A549 (cell line): ENCODE measurements at regions of chr13 and their contacts with region 1.

Region 1: DNA sequence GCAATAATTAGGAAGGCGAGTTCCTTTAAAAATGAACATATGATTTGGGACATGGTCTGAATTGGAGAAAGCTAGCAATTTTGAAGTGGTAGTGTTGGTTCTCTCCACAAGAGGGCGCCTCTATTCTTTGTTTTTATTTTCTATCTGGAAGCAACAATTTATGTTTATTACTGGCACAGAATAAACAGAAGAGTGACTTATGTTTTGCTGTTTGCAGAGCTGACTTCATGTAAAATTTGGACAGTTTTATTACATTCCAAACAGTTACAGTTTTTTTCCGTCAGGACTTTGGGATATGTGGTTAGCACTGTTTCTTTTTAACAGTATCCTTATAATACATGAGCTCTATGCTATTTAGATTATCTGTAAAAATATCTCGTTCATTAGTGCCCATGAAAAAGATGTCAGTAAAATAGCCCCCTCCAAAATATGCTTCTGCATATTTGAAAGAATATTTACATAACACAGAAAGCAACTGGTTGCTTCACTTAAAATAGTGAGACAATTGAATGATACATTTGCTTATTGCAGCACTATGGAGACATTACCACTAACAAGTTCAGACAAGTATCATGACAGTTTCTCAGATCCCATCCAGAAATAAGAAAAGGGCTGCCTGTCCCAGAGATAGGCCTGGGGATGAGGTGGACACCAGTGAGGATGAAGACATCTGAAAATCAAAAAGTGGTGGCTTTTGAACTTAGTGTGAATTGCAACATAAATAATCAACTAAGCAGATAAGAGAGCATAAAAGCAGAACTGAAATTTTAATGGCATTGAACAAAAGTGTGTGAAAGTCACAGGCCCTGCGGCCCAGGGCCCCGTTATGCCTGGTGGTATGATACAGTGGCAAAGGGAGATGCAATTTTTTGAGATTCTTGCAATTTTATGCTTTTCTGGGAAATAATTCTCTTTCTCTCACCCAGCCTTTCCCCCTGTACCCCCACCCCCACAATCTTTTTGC is 32.3 kb upstream of the FGF9 start:
- DNase-seq: peak; percentile 14 to 15
- ATAC-seq: no peak
- H3K4me3 ChIP-seq: no peak overlapping the region
- H3K27ac ChIP-seq: no peak overlapping the region
- H3K4me1 ChIP-seq: peaks cover 10% of the 10 kb centered on the region; the same call in 2 of the 3 replicates
- CTCF ChIP-seq: peak; percentile 61
- EP300 ChIP-seq: no peak
- POLR2A ChIP-seq: no peak
- RAD21 ChIP-seq: peak; percentile 52 to 59

Region 2: GRCh38 chr13:21670006-21670882 is 31.6 kb after region 1 on chr13:
- CTCF ChIA-PET with region 1: interaction called, 12 read pairs
- POLR2A ChIA-PET with region 1: interaction called, 3 read pairs
- DNase-seq: peak; percentile 21 to 48
- ATAC-seq: peak; percentile 60 to 63
- H3K4me3 ChIP-seq: peak overlapping the region; percentile 52
- H3K27ac ChIP-seq: peak overlapping the region in 1 of 2 experiments; percentile 78; a peak in 3 of 6 replicates
- H3K4me1 ChIP-seq: peaks cover 20% of the 10 kb centered on the region; the same call in 2 of the 3 replicates
- CTCF ChIP-seq: no peak; the same call in 2 of the 3 replicates
- EP300 ChIP-seq: no peak
- POLR2A ChIP-seq: no peak
- RAD21 ChIP-seq: no peak

Region 3: GRCh38 chr13:21785989-21786388 is 147.4 kb after region 1 on chr13:
- CTCF ChIA-PET with region 1: no interaction called
- POLR2A ChIA-PET with region 1: no interaction called
- DNase-seq: no peak
- ATAC-seq: no peak
- H3K4me3 ChIP-seq: no peak overlapping the region
- H3K27ac ChIP-seq: no peak overlapping the region
- H3K4me1 ChIP-seq: no peaks in the 10 kb centered on the region
- CTCF ChIP-seq: no peak
- EP300 ChIP-seq: no peak
- POLR2A ChIP-seq: no peak
- RAD21 ChIP-seq: no peak

Region 4: GRCh38 chr13:22285867-22286266 is 647.3 kb after region 1 on chr13:
- CTCF ChIA-PET with region 1: no interaction called
- POLR2A ChIA-PET with region 1: no interaction called
- DNase-seq: no peak
- ATAC-seq: no peak
- H3K4me3 ChIP-seq: no peak overlapping the region
- H3K27ac ChIP-seq: no peak overlapping the region
- H3K4me1 ChIP-seq: no peaks in the 10 kb centered on the region
- CTCF ChIP-seq: no peak
- EP300 ChIP-seq: no peak
- POLR2A ChIP-seq: no peak
- RAD21 ChIP-seq: no peak